ENCODE measurements at regions of chr21 and their contacts with region 1.

Region 1: DNA sequence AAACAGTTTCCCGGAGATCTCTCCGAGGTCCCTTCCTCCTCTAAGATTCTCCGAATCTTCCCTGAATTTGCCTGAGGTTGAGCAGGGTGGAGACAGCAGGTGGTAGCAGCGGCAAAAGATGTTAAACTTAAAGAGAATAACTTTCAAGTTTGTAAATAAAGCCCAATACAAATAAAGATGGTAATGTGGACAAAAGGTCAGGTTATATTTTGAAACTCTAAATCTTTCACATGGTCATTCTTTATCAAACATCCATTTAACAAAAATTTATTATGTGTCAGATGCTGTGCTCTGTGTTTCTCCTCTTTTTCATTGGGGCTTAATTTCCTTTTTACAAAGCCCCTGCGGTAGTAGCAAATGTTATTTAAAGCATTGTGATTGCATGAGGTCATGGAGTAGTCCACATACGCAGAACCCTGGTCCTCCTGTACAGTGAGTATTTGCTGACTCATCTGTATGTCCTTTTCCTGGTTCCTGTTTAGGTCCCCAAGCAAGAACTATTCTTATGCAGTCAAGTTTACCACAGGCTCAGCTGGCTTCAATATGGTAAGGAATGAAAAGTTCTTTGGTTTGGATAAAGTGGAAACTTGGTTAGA is 119.2 kb downstream of the ITSN1 start:
- DNase-seq: no peak
- ATAC-seq: no peak
- H3K4me3 ChIP-seq: no peak overlapping the region
- H3K4me3 Mint-ChIP-seq: no peak overlapping the region
- H3K27ac ChIP-seq: no peak overlapping the region
- H3K27ac Mint-ChIP-seq: no peak overlapping the region
- H3K4me1 ChIP-seq: no peaks in the 10 kb centered on the region
- H3K4me1 Mint-ChIP-seq: no peaks in the 10 kb centered on the region
- H3K27me3 ChIP-seq: no peaks in the 10 kb centered on the region
- H3K27me3 Mint-ChIP-seq: no peaks in the 10 kb centered on the region
- CTCF ChIP-seq: no peak

Region 2: DNA sequence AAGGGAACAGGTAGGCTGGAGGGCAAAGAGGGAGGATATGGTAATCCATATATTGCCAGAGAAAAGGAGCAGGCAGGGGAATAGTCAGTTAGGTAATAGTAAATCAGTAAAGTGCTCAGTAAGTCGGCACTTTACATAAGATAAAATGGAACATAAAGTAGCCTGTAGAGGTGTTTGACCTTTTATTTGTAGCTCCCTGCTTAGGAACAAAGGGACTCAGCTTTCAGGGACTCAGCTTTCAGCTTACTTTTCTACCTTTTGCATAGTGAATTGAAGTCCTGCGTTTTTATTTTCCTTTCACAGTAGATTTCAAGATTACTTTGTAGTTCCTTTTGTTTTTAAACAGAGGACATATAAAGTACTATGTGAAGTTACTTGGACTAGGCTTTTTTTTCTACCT is 31.9 kb before region 1 on chr21:
- CTCF ChIA-PET with region 1: no interaction called
- POLR2A ChIA-PET with region 1: no interaction called
- intact Hi-C with region 1: loop called in 1 of 2 experiments (anchors 1 kb)
- DNase-seq: no peak
- ATAC-seq: no peak
- H3K4me3 ChIP-seq: no peak overlapping the region
- H3K4me3 Mint-ChIP-seq: no peak overlapping the region
- H3K27ac ChIP-seq: no peak overlapping the region
- H3K27ac Mint-ChIP-seq: no peak overlapping the region
- H3K4me1 ChIP-seq: no peaks in the 10 kb centered on the region
- H3K4me1 Mint-ChIP-seq: no peaks in the 10 kb centered on the region
- H3K27me3 ChIP-seq: no peaks in the 10 kb centered on the region
- H3K27me3 Mint-ChIP-seq: no peaks in the 10 kb centered on the region
- CTCF ChIP-seq: no peak

Measured in CD8-positive, alpha-beta T cell (primary cell).